ENCODE measurements at regions of chr6 and their contacts with region 1.

Region 1: GRCh38 chr6:129251669-129252376 is 368.9 kb downstream of the LAMA2 start:
- DNase-seq: no peak
- H3K4me3 ChIP-seq: no peak overlapping the region
- H3K27ac ChIP-seq: no peak overlapping the region
- H3K4me1 ChIP-seq: no peaks in the 10 kb centered on the region
- H3K27me3 ChIP-seq: no peaks in the 10 kb centered on the region
- CTCF ChIP-seq: peak; percentile 60 to 80 (median 61)
- EP300 ChIP-seq: no peak
- POLR2A ChIP-seq: no peak

Region 2: GRCh38 chr6:127737009-127737486 is 1514.8 kb before region 1 on chr6:
- intact Hi-C with region 1: loop called (anchors 10 kb)
- DNase-seq: no peak
- H3K4me3 ChIP-seq: no peak overlapping the region
- H3K27ac ChIP-seq: no peak overlapping the region
- H3K4me1 ChIP-seq: no peaks in the 10 kb centered on the region
- H3K27me3 ChIP-seq: no peaks in the 10 kb centered on the region
- CTCF ChIP-seq: peak; percentile 48 to 65 (median 55)
- EP300 ChIP-seq: no peak
- POLR2A ChIP-seq: no peak

Region 3: GRCh38 chr6:128725271-128726233 is 526.3 kb before region 1 on chr6:
- intact Hi-C with region 1: loop called (anchors 5 kb)
- DNase-seq: no peak
- H3K4me3 ChIP-seq: no peak overlapping the region
- H3K27ac ChIP-seq: no peak overlapping the region
- H3K4me1 ChIP-seq: no peaks in the 10 kb centered on the region
- H3K27me3 ChIP-seq: no peaks in the 10 kb centered on the region
- CTCF ChIP-seq: peak; percentile 26 to 62 (median 55)
- EP300 ChIP-seq: no peak
- POLR2A ChIP-seq: no peak